K562 (cell line): ENCODE measurements at regions of chr1 and their contacts with region 1.

Region 1: GRCh38 chr1:179954493-179955297 is at the start of gene CEP350:
- DNase-seq: peak; percentile 89 to 100 (median 94)
- ATAC-seq: peak; percentile 96
- H3K4me3 ChIP-seq: peak within 1 kb of the TSS; percentile 84
- H3K27ac ChIP-seq: peak within 1 kb of the TSS; percentile 86
- H3K4me1 ChIP-seq: peaks cover 4% of the 10 kb centered on the region in 2 experiments; a peak in 3 of 5 replicates
- H3K27me3 ChIP-seq: no peaks in the 10 kb centered on the region
- CTCF ChIP-seq: peak in 1 of 3 experiments; percentile 36; a peak in 2 of 6 replicates
- EP300 ChIP-seq: no peak; the same call in 1 of the 2 replicates
- POLR2A ChIP-seq: peak; percentile 97
- RAD21 ChIP-seq: no peak; a peak in 2 of 4 replicates
- polyA plus RNA-seq, gene CEP350: 8.3 to 8.7 TPM

Region 2: DNA sequence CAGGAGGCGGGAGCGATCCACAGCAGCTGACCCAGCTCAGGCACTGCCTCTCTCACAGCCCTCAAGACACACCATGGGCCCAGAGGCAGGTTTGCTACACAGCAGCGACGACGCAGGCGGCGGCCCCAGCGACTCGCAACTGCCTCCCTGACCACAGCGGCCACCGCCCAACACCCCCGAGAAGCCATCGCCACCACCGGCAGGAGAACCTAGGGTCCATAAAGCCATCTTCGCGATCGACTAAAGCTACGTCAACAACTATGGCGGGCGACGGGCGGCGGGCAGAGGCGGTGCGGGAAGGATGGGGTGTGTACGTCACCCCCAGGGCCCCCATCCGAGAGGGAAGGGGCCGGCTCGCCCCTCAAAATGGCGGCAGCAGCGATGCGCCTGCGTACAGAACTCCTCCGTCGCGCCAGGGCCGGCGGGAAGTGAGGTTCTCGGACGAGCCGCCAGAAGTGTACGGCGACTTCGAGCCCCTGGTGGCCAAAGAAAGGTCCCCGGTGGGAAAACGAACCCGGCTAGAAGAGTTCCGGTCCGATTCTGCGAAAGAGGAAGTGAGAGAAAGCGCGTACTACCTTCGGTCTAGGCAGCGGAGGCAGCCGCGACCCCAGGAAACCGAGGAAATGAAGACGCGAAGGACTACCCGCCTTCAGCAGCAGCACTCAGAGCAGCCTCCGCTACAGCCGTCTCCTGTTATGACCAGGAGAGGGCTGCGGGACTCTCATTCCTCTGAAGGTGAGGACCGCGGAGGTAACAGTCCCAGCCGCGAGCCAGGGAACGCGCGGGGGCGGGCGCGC is 72.3 kb before region 1 on chr1 and contains the start of gene TOR1AIP1:
- CTCF ChIA-PET with region 1: interaction called, 4 read pairs
- POLR2A ChIA-PET with region 1: interaction called, 5 read pairs
- in situ Hi-C with region 1: no loop called
- intact Hi-C with region 1: loop called (anchors 2 kb)
- DNase-seq: peak; percentile 91 to 99 (median 94)
- ATAC-seq: peak; percentile 88
- H3K4me3 ChIP-seq: peak within 1 kb of the TSS; percentile 87
- H3K27ac ChIP-seq: peak within 1 kb of the TSS; percentile 98
- H3K4me1 ChIP-seq: peaks cover 12% of the 10 kb centered on the region in 2 experiments; a peak in 4 of 5 replicates
- H3K27me3 ChIP-seq: no peaks in the 10 kb centered on the region
- CTCF ChIP-seq: peak; percentile 19 to 26 (median 20); a peak in 2 of 6 replicates
- EP300 ChIP-seq: peak; percentile 64; the same call in 1 of the 2 replicates
- POLR2A ChIP-seq: peak; percentile 98
- RAD21 ChIP-seq: peak; percentile 37 to 41
- polyA plus RNA-seq, gene TOR1AIP1: 27.1 to 38.0 TPM

Region 3: DNA sequence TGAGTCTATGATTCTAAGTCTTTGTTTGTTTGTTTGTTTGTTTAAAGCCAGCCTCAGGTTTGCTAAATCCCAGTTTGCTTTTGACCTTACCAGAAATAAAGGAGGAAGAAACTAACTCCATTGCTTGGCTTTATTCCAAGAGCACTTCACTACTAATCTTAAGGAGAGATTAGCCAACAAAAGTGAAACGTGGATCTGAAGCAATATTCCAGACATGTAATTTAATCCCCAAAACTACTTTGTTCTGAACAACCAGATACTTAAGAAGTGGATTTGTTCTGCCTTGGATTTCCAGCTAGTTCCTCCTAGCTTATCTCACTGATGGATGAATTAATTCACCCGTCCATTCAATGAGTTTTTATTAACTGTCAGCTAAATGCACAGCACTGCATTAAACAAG is 15.9 kb before region 1 on chr1:
- CTCF ChIA-PET with region 1: no interaction called
- POLR2A ChIA-PET with region 1: interaction called, 10 read pairs
- in situ Hi-C with region 1: no loop called
- intact Hi-C with region 1: no loop called
- DNase-seq: no peak
- ATAC-seq: no peak
- H3K4me3 ChIP-seq: no peak overlapping the region
- H3K27ac ChIP-seq: no peak overlapping the region
- H3K4me1 ChIP-seq: no peaks in the 10 kb centered on the region
- H3K27me3 ChIP-seq: no peaks in the 10 kb centered on the region
- CTCF ChIP-seq: no peak
- EP300 ChIP-seq: no peak
- POLR2A ChIP-seq: no peak
- RAD21 ChIP-seq: no peak

Region 4: DNA sequence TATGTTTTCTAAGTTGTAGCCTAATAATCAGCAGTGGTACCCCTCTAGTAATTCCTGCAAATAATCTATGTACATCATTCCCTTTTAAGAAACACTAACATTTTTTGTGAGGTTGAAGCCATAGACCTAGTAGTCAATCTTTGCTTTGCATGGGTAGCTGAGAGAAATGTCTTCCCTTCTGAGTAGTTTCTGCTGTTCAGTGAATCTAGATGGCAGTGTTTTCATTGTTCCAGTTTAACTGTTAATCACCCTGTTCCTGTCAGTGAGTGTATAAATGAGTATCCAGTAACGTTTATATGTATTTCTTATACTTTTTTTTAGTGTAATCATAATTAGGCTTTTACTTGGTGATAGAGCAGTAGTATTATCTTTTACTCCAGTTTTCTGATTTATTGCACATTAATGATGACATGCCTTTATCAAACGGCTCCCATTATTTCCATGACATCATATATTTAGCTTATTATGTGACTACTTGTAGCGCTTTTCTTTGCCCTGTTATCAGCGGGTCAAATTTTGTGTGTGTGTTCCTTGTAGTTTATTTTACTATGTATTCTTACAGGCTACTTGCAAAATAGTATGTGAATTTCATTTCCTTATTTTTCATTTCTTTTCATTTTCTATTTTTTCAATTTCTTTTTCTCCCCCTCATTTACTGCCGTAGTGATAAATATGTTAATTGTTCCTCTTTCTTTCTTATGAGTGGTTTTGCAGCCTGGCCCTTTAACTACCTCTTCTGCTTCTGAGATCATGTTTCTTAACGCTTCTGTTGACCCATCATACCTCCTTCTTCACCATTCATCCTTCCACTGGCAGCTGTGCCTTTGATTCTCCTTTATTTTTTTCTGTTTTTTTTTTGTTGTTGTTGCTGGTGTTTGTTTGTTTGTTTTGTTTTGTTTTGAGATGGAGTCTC is 18.8 kb after region 1 on chr1:
- CTCF ChIA-PET with region 1: no interaction called
- POLR2A ChIA-PET with region 1: interaction called, 8 read pairs
- in situ Hi-C with region 1: no loop called
- intact Hi-C with region 1: loop called (anchors 2 kb)
- DNase-seq: no peak
- ATAC-seq: no peak
- H3K4me3 ChIP-seq: no peak overlapping the region
- H3K27ac ChIP-seq: no peak overlapping the region
- H3K4me1 ChIP-seq: peaks cover 20 to 30% of the 10 kb centered on the region in 2 experiments; a peak in 4 of 5 replicates
- H3K27me3 ChIP-seq: no peaks in the 10 kb centered on the region
- CTCF ChIP-seq: no peak
- EP300 ChIP-seq: no peak
- POLR2A ChIP-seq: no peak
- RAD21 ChIP-seq: no peak

Region 5: DNA sequence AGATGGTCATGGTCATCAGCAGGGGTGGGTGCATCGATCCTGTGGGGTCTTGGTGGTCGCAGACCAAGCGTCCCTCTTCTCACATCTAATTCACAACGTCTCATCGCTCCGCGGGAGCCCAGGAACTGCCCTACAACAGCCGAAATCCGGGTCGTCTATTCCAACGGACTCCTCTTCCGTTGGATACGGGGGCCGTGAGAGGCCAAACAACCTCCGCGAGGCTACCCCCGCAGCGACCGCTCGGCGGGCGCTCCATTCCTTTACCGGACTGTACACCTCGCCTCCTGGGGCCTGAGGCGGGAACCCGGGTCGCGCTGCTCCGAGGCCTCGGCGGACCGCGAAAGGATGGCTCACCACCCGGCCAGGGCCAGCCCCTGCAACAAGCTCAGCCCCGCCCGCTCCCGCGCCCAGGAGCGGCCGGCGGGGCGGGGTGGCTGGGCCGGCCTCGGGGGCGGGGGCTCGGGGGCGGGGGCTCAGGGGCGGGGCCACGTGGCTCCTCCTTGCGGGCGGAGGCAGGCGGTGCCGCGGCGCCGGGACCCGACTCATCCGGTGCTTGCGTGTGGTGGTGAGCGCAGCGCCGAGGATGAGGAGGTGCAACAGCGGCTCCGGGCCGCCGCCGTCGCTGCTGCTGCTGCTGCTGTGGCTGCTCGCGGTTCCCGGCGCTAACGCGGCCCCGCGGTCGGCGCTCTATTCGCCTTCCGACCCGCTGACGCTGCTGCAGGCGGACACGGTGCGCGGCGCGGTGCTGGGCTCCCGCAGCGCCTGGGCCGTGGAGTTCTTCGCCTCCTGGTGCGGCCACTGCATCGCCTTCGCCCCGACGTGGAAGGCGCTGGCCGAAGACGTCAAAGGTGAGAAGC is 199.9 kb after region 1 on chr1 and contains the start of gene QSOX1:
- CTCF ChIA-PET with region 1: no interaction called
- POLR2A ChIA-PET with region 1: no interaction called
- in situ Hi-C with region 1: no loop called
- intact Hi-C with region 1: loop called (anchors 5 kb)
- DNase-seq: peak; percentile 91 to 100 (median 99)
- ATAC-seq: peak; percentile 91
- H3K4me3 ChIP-seq: peak within 1 kb of the TSS; percentile 77
- H3K27ac ChIP-seq: peak within 1 kb of the TSS; percentile 77
- H3K4me1 ChIP-seq: peaks cover 33 to 37% of the 10 kb centered on the region in 2 experiments
- H3K27me3 ChIP-seq: no peaks in the 10 kb centered on the region
- CTCF ChIP-seq: peak in 2 of 3 experiments; percentile 10 to 48; a peak in 1 of 6 replicates
- EP300 ChIP-seq: peak; percentile 63; the same call in 1 of the 2 replicates
- POLR2A ChIP-seq: peak; percentile 85
- RAD21 ChIP-seq: no peak
- polyA plus RNA-seq, gene QSOX1: 4.0 to 4.6 TPM

Region 6: GRCh38 chr1:180178511-180179161 is 223.9 kb after region 1 on chr1:
- CTCF ChIA-PET with region 1: no interaction called
- POLR2A ChIA-PET with region 1: no interaction called
- in situ Hi-C with region 1: no loop called
- intact Hi-C with region 1: loop called (anchors 5 kb)
- DNase-seq: peak; percentile 78 to 82 (median 80)
- ATAC-seq: peak; percentile 68
- H3K4me3 ChIP-seq: no peak overlapping the region
- H3K27ac ChIP-seq: no peak overlapping the region
- H3K4me1 ChIP-seq: no peaks in the 10 kb centered on the region
- H3K27me3 ChIP-seq: no peaks in the 10 kb centered on the region
- CTCF ChIP-seq: peak; percentile 91 to 99 (median 98)
- EP300 ChIP-seq: 0 out of 2 replicates have a peak, but pooled peaks have one; percentile 16
- POLR2A ChIP-seq: no peak
- RAD21 ChIP-seq: peak; percentile 93 to 97